ENCODE measurements at regions of chr7 and their contacts with region 1.

Region 1: DNA sequence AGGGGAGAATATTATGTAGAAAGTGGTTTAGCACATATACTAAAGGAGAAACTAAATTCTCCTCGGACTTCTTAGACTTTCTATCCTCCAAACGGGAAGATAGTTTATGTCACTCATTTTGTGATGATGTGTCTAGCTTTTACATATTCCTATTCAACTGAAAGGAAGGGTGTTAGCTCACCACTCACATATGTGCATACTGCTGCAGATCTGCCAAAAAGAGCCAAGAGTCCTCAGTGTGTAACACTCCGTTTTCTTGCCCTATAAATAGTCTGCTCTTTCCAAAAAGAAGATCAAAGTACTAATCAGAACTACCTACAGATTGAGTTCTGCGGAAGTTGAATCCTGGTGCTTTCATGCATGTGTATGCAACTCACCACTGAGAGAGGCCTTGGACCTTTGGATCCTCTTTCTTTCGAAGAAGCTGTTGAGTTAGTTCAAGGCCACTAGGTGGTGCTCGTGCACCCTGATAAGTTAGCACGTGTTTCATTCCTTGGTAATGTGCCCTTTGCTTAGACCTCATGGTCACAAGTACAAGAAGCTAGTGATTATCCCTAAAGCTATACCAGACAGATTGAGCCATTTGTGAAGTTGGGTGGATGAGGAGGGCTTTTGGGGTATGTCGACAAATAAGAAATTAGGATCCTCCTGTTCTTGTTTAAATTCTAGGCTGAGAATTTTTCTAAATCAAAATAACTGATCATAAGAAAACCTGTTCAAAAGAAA is 14.1 kb downstream of the YAE1 start:
- DNase-seq: peak; percentile 90
- H3K4me3 Mint-ChIP-seq: no peak overlapping the region
- H3K27ac Mint-ChIP-seq: no peak overlapping the region
- H3K4me1 Mint-ChIP-seq: peaks cover 12% of the 10 kb centered on the region
- H3K27me3 Mint-ChIP-seq: no peaks in the 10 kb centered on the region
- CTCF ChIP-seq: peak; percentile 76

Region 2: GRCh38 chr7:39085590-39086049 is 494.7 kb before region 1 on chr7:
- CTCF ChIA-PET with region 1: no interaction called
- POLR2A ChIA-PET with region 1: no interaction called
- intact Hi-C with region 1: no loop called
- DNase-seq: no peak
- H3K4me3 Mint-ChIP-seq: no peak overlapping the region
- H3K27ac Mint-ChIP-seq: no peak overlapping the region
- H3K4me1 Mint-ChIP-seq: no peaks in the 10 kb centered on the region
- H3K27me3 Mint-ChIP-seq: peaks cover 74% of the 10 kb centered on the region
- CTCF ChIP-seq: no peak

Region 3: GRCh38 chr7:39616138-39616537 is 35.8 kb after region 1 on chr7:
- CTCF ChIA-PET with region 1: interaction called, 14 read pairs
- POLR2A ChIA-PET with region 1: interaction called, 3 read pairs
- intact Hi-C with region 1: no loop called
- DNase-seq: no peak
- H3K4me3 Mint-ChIP-seq: no peak overlapping the region
- H3K27ac Mint-ChIP-seq: no peak overlapping the region
- H3K4me1 Mint-ChIP-seq: peaks cover 19% of the 10 kb centered on the region
- H3K27me3 Mint-ChIP-seq: no peaks in the 10 kb centered on the region
- CTCF ChIP-seq: no peak

Region 4: GRCh38 chr7:39732837-39733804 is 152.8 kb after region 1 on chr7:
- CTCF ChIA-PET with region 1: interaction called, 25 read pairs
- POLR2A ChIA-PET with region 1: interaction called, 9 read pairs
- intact Hi-C with region 1: no loop called
- DNase-seq: peak; percentile 93
- H3K4me3 Mint-ChIP-seq: peak overlapping the region; percentile 88
- H3K27ac Mint-ChIP-seq: peak overlapping the region; percentile 96
- H3K4me1 Mint-ChIP-seq: peaks cover 18% of the 10 kb centered on the region
- H3K27me3 Mint-ChIP-seq: no peaks in the 10 kb centered on the region
- CTCF ChIP-seq: no peak

Region 5: GRCh38 chr7:39948956-39949928 is 368.9 kb after region 1 on chr7:
- CTCF ChIA-PET with region 1: interaction called, 3 read pairs
- POLR2A ChIA-PET with region 1: interaction called, 3 read pairs
- intact Hi-C with region 1: loop called (anchors 5 kb)
- DNase-seq: peak; percentile 99
- H3K4me3 Mint-ChIP-seq: peak overlapping the region; percentile 96
- H3K27ac Mint-ChIP-seq: peak overlapping the region; percentile 96
- H3K4me1 Mint-ChIP-seq: no peaks in the 10 kb centered on the region
- H3K27me3 Mint-ChIP-seq: no peaks in the 10 kb centered on the region
- CTCF ChIP-seq: no peak